Sciatic nerve (tissue), 2 donors: ENCODE measurements at regions of chr14 and their contacts with region 1.

Region 1: DNA sequence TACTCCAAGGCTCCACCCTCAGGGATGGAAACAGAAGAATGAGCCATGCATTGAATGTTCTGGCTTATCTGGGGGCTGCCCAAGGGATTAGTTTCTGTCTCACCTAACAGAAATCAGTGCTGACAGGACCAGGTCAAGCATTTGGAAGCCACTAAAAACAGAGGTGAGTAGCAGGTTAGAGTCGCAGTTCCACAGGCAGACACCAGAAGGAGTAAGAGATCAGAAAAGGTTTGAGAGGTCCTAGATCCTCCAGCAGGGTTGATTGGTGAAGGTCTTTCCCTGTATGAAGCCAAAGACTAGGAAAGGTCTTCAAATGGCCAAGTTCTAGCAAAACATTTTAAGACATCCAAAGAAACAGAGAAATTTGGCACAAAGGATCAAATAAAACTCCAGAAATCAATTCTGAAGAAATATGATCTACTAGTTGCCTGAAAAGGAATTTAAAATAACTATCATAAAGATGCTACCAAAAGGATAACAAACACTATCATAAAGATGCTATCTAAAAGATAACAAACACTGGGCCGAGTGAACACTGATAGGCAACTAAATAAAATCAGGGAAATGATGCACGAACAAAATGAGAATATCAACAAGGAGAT is 19.5 kb upstream of the TTC9 start:
- DNase-seq: no peak
- ATAC-seq: no peak

Region 2: GRCh38 chr14:70716958-70717357 is 94.7 kb after region 1 on chr14:
- intact Hi-C with region 1: loop called (anchors 5 kb)
- DNase-seq: no peak
- ATAC-seq: no peak